ENCODE measurements at regions of chr15 and their contacts with region 1.

Region 1: DNA sequence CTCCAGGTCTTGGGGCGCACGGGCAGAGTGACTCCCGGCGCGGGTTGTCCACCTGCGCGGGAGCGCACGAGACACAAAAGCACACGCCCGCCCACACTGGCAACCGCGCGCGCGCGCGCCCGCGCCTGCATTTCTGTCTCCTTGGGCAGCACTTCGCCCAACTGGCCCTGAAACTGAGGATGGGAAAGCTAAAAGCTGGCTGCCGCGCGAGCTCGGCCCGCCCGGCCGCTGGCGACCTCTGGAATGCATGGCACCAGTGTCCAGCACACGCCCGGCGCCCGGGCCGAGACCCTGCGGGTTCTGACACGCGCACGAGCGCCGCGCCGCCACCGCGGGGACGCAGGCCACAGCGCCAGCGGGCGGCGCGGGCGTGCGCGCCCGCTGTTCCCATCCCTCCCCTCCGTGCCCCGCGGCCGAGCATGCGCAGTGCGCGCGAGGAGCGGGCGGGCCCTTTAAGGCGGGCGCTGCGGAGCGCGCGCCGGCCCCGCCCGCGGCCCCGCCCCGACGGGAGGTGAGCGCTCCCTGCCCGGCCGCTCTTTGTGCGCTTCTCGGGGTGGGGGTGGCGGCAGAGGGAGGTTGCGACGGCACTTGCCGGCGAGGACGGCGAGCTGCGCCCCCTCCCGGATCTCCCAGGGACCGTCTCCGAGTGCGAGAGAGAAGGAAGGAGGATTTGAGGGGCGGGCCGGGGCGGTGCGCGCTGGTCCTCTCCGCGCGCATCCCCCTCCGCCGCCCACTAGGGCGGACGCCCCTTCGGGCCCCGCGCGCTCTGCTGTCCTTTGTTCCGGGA is 1.0 kb upstream of the MEX3B start:
- DNase-seq: peak; percentile 94 to 95
- ATAC-seq: peak; percentile 47 to 74
- H3K4me3 ChIP-seq: peak overlapping the region; percentile 61
- H3K27ac ChIP-seq: peak overlapping the region; percentile 87 to 93
- H3K4me1 ChIP-seq: peaks cover 4% of the 10 kb centered on the region; the same call in 1 of the 3 replicates
- CTCF ChIP-seq: peak; percentile 81
- EP300 ChIP-seq: no peak
- POLR2A ChIP-seq: peak; percentile 88
- RAD21 ChIP-seq: peak; percentile 59 to 83

Region 2: GRCh38 chr15:81480645-81481053 is 566.2 kb before region 1 on chr15:
- CTCF ChIA-PET with region 1: interaction called, 13 read pairs
- POLR2A ChIA-PET with region 1: interaction called, 3 read pairs
- DNase-seq: peak in 1 of 2 experiments; percentile 61
- ATAC-seq: peak; percentile 44 to 90; a peak in 4 of 6 replicates
- H3K4me3 ChIP-seq: no peak overlapping the region
- H3K27ac ChIP-seq: no peak overlapping the region
- H3K4me1 ChIP-seq: no peaks in the 10 kb centered on the region
- CTCF ChIP-seq: peak; percentile 94
- EP300 ChIP-seq: no peak
- POLR2A ChIP-seq: no peak
- RAD21 ChIP-seq: peak; percentile 86 to 92

Region 3: GRCh38 chr15:81992523-81992922 is 54.3 kb before region 1 on chr15:
- CTCF ChIA-PET with region 1: no interaction called
- POLR2A ChIA-PET with region 1: no interaction called
- DNase-seq: no peak
- ATAC-seq: no peak
- H3K4me3 ChIP-seq: no peak overlapping the region
- H3K27ac ChIP-seq: no peak overlapping the region
- H3K4me1 ChIP-seq: no peaks in the 10 kb centered on the region
- CTCF ChIP-seq: no peak
- EP300 ChIP-seq: no peak
- POLR2A ChIP-seq: no peak
- RAD21 ChIP-seq: no peak

Region 4: GRCh38 chr15:82031871-82032270 is 15.0 kb before region 1 on chr15:
- CTCF ChIA-PET with region 1: interaction called, 10 read pairs
- POLR2A ChIA-PET with region 1: interaction called, 4 read pairs
- DNase-seq: no peak
- ATAC-seq: no peak
- H3K4me3 ChIP-seq: no peak overlapping the region
- H3K27ac ChIP-seq: no peak overlapping the region
- H3K4me1 ChIP-seq: no peaks in the 10 kb centered on the region
- CTCF ChIP-seq: no peak
- EP300 ChIP-seq: no peak
- POLR2A ChIP-seq: no peak
- RAD21 ChIP-seq: no peak

Region 5: DNA sequence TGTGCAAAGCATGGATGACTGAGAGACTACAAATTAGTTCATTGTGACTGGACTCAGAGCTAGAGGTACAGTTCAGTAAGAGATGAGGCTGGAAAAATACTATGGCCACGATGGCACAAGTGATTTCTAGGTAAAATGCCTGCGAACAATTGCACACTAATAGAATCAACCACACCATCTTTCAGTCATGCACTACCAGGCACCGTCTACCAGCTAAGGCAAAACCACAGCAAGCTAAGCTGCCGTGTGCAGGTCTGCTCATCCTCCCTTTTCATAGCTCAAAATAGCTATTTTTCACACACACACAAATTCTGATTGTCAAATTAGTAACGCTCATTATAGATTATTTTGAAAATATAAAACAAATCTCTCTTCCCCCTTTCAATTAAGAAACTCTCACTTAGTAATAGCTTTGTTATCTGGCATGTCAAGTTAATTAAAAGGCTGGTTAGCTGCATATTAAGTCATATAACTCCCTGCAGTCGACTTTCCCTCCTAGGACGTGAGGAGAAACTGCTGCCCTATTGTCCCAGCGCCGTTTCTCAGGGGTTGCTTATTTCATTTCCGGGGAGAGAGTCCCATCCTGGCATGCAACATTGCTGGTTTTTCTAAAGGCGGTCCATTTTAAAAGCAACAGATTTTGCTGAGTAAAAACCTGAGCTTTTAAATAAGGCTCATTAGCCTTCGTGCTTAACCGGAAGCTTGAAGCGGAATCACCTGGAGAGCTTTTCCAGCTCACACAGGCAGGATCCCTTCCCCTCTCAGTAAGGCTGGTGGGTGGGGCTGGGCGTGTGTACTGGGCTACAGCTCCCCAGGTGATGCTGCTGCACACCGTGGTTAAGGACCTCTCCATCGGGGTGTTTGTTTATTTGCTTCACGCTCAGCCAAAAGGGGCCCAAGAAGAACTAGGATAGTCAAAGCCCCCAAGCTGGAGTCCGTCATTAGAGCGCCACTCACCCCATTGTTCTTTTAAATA is 15.9 kb after region 1 on chr15:
- CTCF ChIA-PET with region 1: interaction called, 16 read pairs
- POLR2A ChIA-PET with region 1: interaction called, 4 read pairs
- DNase-seq: no peak
- ATAC-seq: 0 out of 6 replicates have a peak, but pooled peaks of 1 of the 2 experiments have one; percentile 16
- H3K4me3 ChIP-seq: no peak overlapping the region
- H3K27ac ChIP-seq: no peak overlapping the region
- H3K4me1 ChIP-seq: no peaks in the 10 kb centered on the region; the same call in 2 of the 3 replicates
- CTCF ChIP-seq: no peak
- EP300 ChIP-seq: no peak
- POLR2A ChIP-seq: no peak
- RAD21 ChIP-seq: no peak

Region 6: DNA sequence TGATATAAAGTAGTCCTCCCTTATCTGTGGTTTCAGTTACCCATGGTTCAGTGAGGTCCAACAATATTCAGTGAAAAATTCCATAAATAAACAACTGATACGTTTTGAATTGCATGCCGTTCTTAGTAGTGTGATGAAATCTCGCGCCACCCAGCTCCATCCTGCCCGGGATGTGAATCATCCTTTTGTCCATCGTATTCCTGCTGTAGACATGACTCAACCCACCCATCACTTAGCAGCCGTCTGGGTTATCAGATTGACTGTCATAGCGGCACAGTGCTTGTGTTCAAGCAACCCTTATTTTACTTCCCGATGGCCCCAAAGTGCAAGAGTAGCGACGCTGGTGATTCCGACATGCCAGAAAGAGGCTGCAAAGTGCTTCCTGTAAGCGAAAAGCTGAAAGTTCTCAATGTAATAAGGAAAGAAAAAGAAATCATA is 46.9 kb after region 1 on chr15:
- CTCF ChIA-PET with region 1: interaction called, 3 read pairs
- POLR2A ChIA-PET with region 1: interaction called, 17 read pairs
- DNase-seq: peak; percentile 74 to 86
- ATAC-seq: peak; percentile 98
- H3K4me3 ChIP-seq: peak overlapping the region; percentile 20; the same call in 2 of the 3 replicates
- H3K27ac ChIP-seq: peak overlapping the region; percentile 69 to 86
- H3K4me1 ChIP-seq: peaks cover 12% of the 10 kb centered on the region; the same call in 2 of the 3 replicates
- CTCF ChIP-seq: no peak
- EP300 ChIP-seq: peak in 1 of 2 experiments; percentile 17; a peak in 1 of 5 replicates
- POLR2A ChIP-seq: no peak
- RAD21 ChIP-seq: no peak

Region 7: DNA sequence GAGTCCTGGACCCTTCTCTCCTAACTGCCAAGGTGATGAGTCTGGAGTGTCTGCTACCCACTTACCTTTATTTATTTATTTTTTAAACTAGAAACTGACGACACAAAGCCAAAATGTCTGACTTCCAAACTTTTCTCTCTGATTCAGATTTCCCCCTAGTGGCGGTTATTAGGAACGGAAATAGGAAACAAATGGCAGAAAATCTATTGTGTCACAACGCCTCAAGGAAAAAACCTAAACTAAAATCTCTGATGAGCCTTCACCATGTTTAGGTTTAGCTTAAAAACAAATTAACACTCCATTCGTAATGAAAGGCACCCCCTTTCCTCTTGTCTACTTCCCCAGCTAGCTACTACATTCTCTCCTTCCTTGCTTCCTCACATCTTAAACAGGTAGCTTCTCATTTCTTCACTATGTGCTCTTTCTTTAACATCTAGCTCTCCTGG is 93.0 kb after region 1 on chr15:
- CTCF ChIA-PET with region 1: interaction called, 11 read pairs
- POLR2A ChIA-PET with region 1: interaction called, 3 read pairs
- DNase-seq: peak; percentile 56 to 63
- ATAC-seq: peak; percentile 79 to 84
- H3K4me3 ChIP-seq: no peak overlapping the region
- H3K27ac ChIP-seq: peak overlapping the region in 1 of 2 experiments; percentile 43; a peak in 1 of 6 replicates
- H3K4me1 ChIP-seq: 0 out of 3 replicates have a peak, but pooled peaks cover 3% of the 10 kb centered on the region
- CTCF ChIP-seq: peak; percentile 88
- EP300 ChIP-seq: no peak
- POLR2A ChIP-seq: no peak
- RAD21 ChIP-seq: peak; percentile 81 to 82

Measured in A549 (cell line).